ENCODE measurements at regions of chr12 and their contacts with region 1.

Region 1: DNA sequence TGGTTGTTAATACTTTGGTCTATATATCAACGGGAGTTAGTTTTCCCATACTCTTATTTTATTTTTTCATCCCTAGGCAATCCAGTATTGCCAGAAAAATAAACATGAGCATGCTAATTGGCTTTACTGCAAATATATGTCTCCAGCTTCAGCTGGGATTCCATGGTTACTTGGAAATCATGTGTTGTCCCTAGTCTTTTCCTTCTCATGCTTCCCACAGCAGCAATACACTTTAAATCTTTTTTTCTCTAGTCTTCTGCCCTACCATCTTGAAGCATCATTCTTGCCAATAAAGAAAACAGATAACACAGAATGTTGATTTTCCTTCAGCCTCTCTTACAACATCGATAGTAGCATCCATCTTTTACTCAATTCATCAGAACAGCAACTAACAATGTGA is 60.2 kb downstream of the SLC2A13 start:
- DNase-seq: no peak
- H3K4me3 ChIP-seq: no peak overlapping the region
- H3K27ac ChIP-seq: no peak overlapping the region
- H3K4me1 ChIP-seq: no peaks in the 10 kb centered on the region
- H3K27me3 ChIP-seq: no peaks in the 10 kb centered on the region
- CTCF ChIP-seq: no peak
- POLR2A ChIP-seq: no peak

Region 2: GRCh38 chr12:39792938-39793337 is 252.7 kb before region 1 on chr12:
- intact Hi-C with region 1: loop called (anchors 2 kb)
- DNase-seq: no peak
- H3K4me3 ChIP-seq: no peak overlapping the region
- H3K27ac ChIP-seq: no peak overlapping the region
- H3K4me1 ChIP-seq: no peaks in the 10 kb centered on the region
- H3K27me3 ChIP-seq: no peaks in the 10 kb centered on the region
- CTCF ChIP-seq: no peak
- POLR2A ChIP-seq: no peak

Region 3: DNA sequence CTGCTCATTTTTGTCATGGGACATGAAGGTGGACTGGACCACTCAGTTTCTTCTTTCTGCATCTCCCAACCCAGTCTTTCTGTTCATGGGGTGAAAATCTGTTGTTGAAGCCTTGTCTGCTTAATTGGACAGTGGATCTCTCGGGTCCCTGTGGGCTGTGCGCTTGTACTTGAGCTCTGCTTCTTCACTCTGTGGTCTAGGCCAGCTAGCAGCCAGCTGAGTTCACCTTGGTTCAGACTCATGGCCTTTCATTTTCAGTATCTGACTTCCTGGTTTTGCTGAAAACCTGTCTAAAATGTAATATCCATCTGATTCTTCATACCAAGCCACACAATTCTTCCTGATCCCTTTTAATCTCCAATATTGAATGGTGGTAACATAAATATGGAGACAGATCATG is 296.4 kb after region 1 on chr12:
- intact Hi-C with region 1: no loop called
- DNase-seq: no peak
- H3K4me3 ChIP-seq: no peak overlapping the region
- H3K27ac ChIP-seq: no peak overlapping the region
- H3K4me1 ChIP-seq: no peaks in the 10 kb centered on the region
- H3K27me3 ChIP-seq: no peaks in the 10 kb centered on the region
- CTCF ChIP-seq: no peak
- POLR2A ChIP-seq: no peak

Measured in vagina (tissue), 2 donors.